ENCODE measurements at regions of chr9 and their contacts with region 1.

Region 1: GRCh38 chr9:110623462-110624025 is 44.0 kb upstream of the SVEP1 start:
- DNase-seq: no peak
- ATAC-seq: no peak
- H3K4me3 ChIP-seq: no peak overlapping the region
- H3K27ac ChIP-seq: no peak overlapping the region
- H3K4me1 ChIP-seq: no peaks in the 10 kb centered on the region
- H3K27me3 ChIP-seq: no peaks in the 10 kb centered on the region

Region 2: DNA sequence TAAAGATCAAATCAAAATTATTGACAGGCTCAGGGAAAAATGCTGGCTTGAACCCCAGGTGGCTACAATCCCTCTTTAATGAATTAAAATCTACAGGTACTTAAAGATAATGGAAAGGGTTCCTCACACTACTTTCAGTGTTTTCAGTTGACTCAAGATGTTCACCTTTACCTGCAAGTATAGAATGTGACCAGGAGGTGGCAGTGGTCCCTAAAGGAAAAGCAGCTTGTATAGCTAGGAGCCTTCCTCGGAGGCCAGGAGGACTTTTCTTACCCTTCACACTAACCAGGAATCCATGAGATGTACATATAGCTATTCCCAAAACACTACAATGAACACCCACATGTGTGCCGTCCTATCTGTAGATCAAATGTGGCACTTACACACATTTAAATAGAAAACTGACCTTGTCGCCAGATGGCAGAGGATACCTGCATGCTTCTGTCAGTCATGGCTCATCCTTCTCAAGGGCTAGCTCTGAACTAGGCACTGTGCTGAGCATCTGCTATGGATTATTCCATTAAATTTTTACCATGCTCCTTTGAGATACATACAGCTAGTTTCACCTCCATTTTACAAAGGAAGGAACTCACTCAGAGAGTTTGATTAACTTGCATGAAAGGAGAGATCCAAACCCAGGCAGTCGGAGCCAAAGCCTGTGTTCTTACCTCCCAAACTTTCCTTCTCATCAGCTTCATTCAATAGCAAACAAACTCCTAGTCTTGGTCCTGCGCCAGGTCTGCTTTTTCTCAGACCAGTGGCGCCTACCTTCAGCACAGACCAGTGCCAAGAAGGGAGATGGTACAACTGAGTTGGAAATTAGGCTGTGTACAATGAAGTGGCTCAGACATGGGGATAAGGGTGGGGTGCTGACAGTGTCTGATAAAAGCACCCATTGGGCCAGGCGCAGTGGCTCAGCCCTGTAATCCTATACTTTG is 440.1 kb before region 1 on chr9:
- intact Hi-C with region 1: loop called in 1 of 4 experiments (anchors 10 kb)
- DNase-seq: peak in 1 of 3 donors; percentile 38
- ATAC-seq: peak; percentile 53 to 62
- H3K4me3 ChIP-seq: no peak overlapping the region
- H3K27ac ChIP-seq: no peak overlapping the region
- H3K4me1 ChIP-seq: peaks cover 3% of the 10 kb centered on the region
- H3K27me3 ChIP-seq: no peaks in the 10 kb centered on the region

Region 3: GRCh38 chr9:110452227-110452801 is 171.2 kb before region 1 on chr9:
- intact Hi-C with region 1: loop called in 3 of 4 experiments (anchors 5 to 10 kb)
- DNase-seq: no peak
- ATAC-seq: no peak
- H3K4me3 ChIP-seq: no peak overlapping the region
- H3K27ac ChIP-seq: no peak overlapping the region
- H3K4me1 ChIP-seq: no peaks in the 10 kb centered on the region
- H3K27me3 ChIP-seq: no peaks in the 10 kb centered on the region